ENCODE measurements at regions of chr5 and their contacts with region 1.

Region 1: GRCh38 chr5:149561848-149562247 is 10.6 kb upstream of the CSNK1A1 start:
- DNase-seq: peak; percentile 92
- H3K4me3 ChIP-seq: peak overlapping the region in 2 of 3 experiments; percentile 36 to 38
- H3K27ac ChIP-seq: peak overlapping the region; percentile 89
- H3K4me1 ChIP-seq: peaks cover 36% of the 10 kb centered on the region
- H3K27me3 ChIP-seq: no peaks in the 10 kb centered on the region
- CTCF ChIP-seq: no peak

Region 2: GRCh38 chr5:149317281-149318048 is 244.4 kb before region 1 on chr5:
- CTCF ChIA-PET with region 1: no interaction called
- dilution Hi-C with region 1: no loop called
- in situ Hi-C with region 1: no loop called
- intact Hi-C with region 1: loop called (anchors 1 kb)
- DNase-seq: peak; percentile 37
- H3K4me3 ChIP-seq: no peak overlapping the region
- H3K27ac ChIP-seq: no peak overlapping the region
- H3K4me1 ChIP-seq: peaks cover 20% of the 10 kb centered on the region
- H3K27me3 ChIP-seq: no peaks in the 10 kb centered on the region
- CTCF ChIP-seq: peak; percentile 74 to 75

Region 3: GRCh38 chr5:149434162-149435014 is 127.5 kb before region 1 on chr5:
- CTCF ChIA-PET with region 1: no interaction called
- dilution Hi-C with region 1: no loop called
- in situ Hi-C with region 1: no loop called
- intact Hi-C with region 1: loop called (anchors 1 kb)
- DNase-seq: no peak
- H3K4me3 ChIP-seq: no peak overlapping the region
- H3K27ac ChIP-seq: no peak overlapping the region
- H3K4me1 ChIP-seq: peaks cover 16% of the 10 kb centered on the region
- H3K27me3 ChIP-seq: no peaks in the 10 kb centered on the region
- CTCF ChIP-seq: peak; percentile 93

Region 4: GRCh38 chr5:149485655-149486425 is 76.0 kb before region 1 on chr5:
- CTCF ChIA-PET with region 1: no interaction called
- dilution Hi-C with region 1: no loop called
- in situ Hi-C with region 1: no loop called
- intact Hi-C with region 1: loop called (anchors 1 kb)
- DNase-seq: peak; percentile 99
- H3K4me3 ChIP-seq: no peak overlapping the region
- H3K27ac ChIP-seq: peak overlapping the region; percentile 97
- H3K4me1 ChIP-seq: peaks cover 63% of the 10 kb centered on the region
- H3K27me3 ChIP-seq: no peaks in the 10 kb centered on the region
- CTCF ChIP-seq: no peak

Region 5: GRCh38 chr5:149618581-149619251 is 56.9 kb after region 1 on chr5:
- CTCF ChIA-PET with region 1: interaction called, 15 read pairs
- dilution Hi-C with region 1: no loop called
- in situ Hi-C with region 1: no loop called
- intact Hi-C with region 1: loop called (anchors 1 kb)
- DNase-seq: peak; percentile 99
- H3K4me3 ChIP-seq: no peak overlapping the region
- H3K27ac ChIP-seq: peak overlapping the region; percentile 82
- H3K4me1 ChIP-seq: peaks cover 24% of the 10 kb centered on the region
- H3K27me3 ChIP-seq: no peaks in the 10 kb centered on the region
- CTCF ChIP-seq: peak; percentile 73 to 75

Measured in mammary epithelial cell (primary cell).